MCF 10A (cell line): ENCODE measurements at regions of chr19 and their contacts with region 1.

Region 1: GRCh38 chr19:32405431-32406161 is at the start of gene DPY19L3:
- DNase-seq: peak; percentile 92
- H3K4me3 Mint-ChIP-seq: peak within 1 kb of the TSS; percentile 79
- H3K27ac Mint-ChIP-seq: peak within 1 kb of the TSS; percentile 93
- H3K4me1 Mint-ChIP-seq: peaks cover 20% of the 10 kb centered on the region
- H3K27me3 Mint-ChIP-seq: no peaks in the 10 kb centered on the region
- CTCF ChIP-seq: no peak
- total RNA-seq, gene DPY19L3: 37.6 and 43.8 TPM in 2 replicates

Region 2: GRCh38 chr19:32373585-32374295 is 31.9 kb before region 1 on chr19:
- CTCF ChIA-PET with region 1: no interaction called
- POLR2A ChIA-PET with region 1: interaction called, 39 read pairs
- intact Hi-C with region 1: loop called (anchors 1 kb)
- DNase-seq: peak; percentile 97
- H3K4me3 Mint-ChIP-seq: peak overlapping the region; percentile 52
- H3K27ac Mint-ChIP-seq: peak overlapping the region; percentile 72
- H3K4me1 Mint-ChIP-seq: peaks cover 22% of the 10 kb centered on the region
- H3K27me3 Mint-ChIP-seq: no peaks in the 10 kb centered on the region
- CTCF ChIP-seq: no peak

Region 3: DNA sequence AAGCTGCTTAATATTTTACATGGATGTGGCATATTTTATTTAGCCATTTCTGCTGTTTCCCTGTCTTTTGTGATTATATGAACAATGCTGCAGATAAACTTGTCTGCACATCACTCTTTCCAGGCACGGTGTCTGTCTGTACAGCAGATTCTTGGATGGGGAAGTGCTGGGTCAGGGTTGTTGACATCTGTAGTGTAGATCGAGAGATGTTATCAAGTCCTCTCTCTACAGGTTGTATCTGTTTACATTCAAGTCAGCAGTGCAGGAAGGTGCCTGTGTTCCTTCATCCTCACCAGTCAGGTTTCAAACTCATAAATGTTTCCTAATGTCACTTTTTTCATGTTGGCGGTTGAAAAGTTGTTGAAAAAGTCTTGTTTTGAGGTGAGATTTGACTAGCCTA is 73.2 kb after region 1 on chr19:
- CTCF ChIA-PET with region 1: no interaction called
- POLR2A ChIA-PET with region 1: no interaction called
- intact Hi-C with region 1: no loop called
- DNase-seq: no peak
- H3K4me3 Mint-ChIP-seq: no peak overlapping the region
- H3K27ac Mint-ChIP-seq: no peak overlapping the region
- H3K4me1 Mint-ChIP-seq: no peaks in the 10 kb centered on the region
- H3K27me3 Mint-ChIP-seq: no peaks in the 10 kb centered on the region
- CTCF ChIP-seq: no peak

Region 4: DNA sequence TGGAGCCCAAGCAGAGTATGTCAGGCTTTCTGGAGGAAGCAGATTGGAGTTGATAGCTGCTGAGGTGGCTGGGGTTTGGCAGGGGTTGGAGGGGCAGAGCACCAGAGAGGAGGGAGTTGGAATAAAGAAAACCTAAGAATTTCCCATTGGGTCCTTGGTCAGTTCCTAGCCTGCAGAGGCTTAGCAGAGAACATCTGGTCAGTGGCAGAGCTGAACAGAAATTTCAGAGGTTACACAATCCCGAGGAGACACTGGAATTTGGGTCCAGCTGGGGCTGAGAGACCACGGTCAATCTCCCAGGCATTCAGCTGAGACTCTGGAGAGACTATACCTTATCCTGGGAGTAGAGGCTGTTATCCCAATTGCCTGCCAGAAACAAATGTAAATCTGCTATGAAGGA is 84.4 kb after region 1 on chr19:
- CTCF ChIA-PET with region 1: no interaction called
- POLR2A ChIA-PET with region 1: no interaction called
- intact Hi-C with region 1: no loop called
- DNase-seq: no peak
- H3K4me3 Mint-ChIP-seq: no peak overlapping the region
- H3K27ac Mint-ChIP-seq: no peak overlapping the region
- H3K4me1 Mint-ChIP-seq: no peaks in the 10 kb centered on the region
- H3K27me3 Mint-ChIP-seq: no peaks in the 10 kb centered on the region
- CTCF ChIP-seq: no peak

Region 5: DNA sequence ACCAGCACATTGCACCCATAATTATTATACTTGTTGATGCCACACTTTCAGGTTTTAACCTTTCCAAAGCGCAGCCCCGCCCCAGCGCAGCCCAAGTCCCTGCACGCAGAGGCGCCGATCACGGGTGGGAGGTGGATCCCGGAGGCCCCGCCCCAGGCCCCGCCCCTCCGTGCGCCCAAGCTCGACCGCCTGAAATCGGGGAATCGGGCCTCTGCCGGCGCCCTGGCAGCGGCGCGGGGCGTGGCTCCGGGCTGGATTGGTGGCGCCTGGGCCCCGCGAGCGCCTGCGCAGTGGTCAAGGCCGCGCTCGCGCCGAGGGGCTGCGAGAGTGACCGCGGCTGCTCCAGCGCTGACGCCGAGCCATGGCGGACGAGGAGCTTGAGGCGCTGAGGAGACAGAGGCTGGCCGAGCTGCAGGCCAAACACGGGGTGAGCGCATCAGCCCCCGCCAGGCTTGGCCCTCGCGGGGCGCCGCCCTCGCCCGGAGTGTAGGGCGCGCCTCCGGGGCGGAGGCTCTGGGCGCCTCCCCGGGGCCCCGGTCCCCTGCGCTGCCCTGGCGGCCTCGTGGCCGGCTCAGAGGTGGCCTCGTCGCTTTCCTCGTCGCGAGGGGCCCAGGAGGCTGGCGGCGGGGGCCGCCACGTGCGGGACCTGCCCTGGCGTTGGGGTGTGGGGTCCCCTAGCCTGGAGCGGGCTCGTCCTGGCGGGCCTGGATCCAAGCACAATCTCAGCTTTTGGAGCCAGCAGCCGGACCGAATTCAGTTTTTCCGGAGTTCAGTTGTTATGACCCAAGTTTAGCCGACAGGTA is 175.5 kb after region 1 on chr19 and contains the start of gene PDCD5:
- CTCF ChIA-PET with region 1: no interaction called
- POLR2A ChIA-PET with region 1: interaction called, 28 read pairs
- intact Hi-C with region 1: no loop called
- DNase-seq: peak; percentile 95
- H3K4me3 Mint-ChIP-seq: peak within 1 kb of the TSS; percentile 90
- H3K27ac Mint-ChIP-seq: peak within 1 kb of the TSS; percentile 83
- H3K4me1 Mint-ChIP-seq: peaks cover 7% of the 10 kb centered on the region
- H3K27me3 Mint-ChIP-seq: no peaks in the 10 kb centered on the region
- CTCF ChIP-seq: no peak
- total RNA-seq, gene PDCD5: 261 and 290 TPM in 2 replicates

Region 6: GRCh38 chr19:32595491-32595890 is 189.9 kb after region 1 on chr19:
- CTCF ChIA-PET with region 1: no interaction called
- POLR2A ChIA-PET with region 1: no interaction called
- intact Hi-C with region 1: no loop called
- DNase-seq: no peak
- H3K4me3 Mint-ChIP-seq: no peak overlapping the region
- H3K27ac Mint-ChIP-seq: no peak overlapping the region
- H3K4me1 Mint-ChIP-seq: no peaks in the 10 kb centered on the region
- H3K27me3 Mint-ChIP-seq: no peaks in the 10 kb centered on the region
- CTCF ChIP-seq: no peak